ENCODE measurements at regions of chr12 and their contacts with region 1.

Region 1: GRCh38 chr12:111807232-111807631 is 34.8 kb upstream of the MAPKAPK5 start:
- DNase-seq: no peak
- ATAC-seq: no peak
- H3K4me3 Mint-ChIP-seq: no peak overlapping the region
- H3K27ac Mint-ChIP-seq: no peak overlapping the region
- H3K4me1 Mint-ChIP-seq: no peaks in the 10 kb centered on the region
- H3K27me3 Mint-ChIP-seq: no peaks in the 10 kb centered on the region
- CTCF ChIP-seq: no peak

Region 2: DNA sequence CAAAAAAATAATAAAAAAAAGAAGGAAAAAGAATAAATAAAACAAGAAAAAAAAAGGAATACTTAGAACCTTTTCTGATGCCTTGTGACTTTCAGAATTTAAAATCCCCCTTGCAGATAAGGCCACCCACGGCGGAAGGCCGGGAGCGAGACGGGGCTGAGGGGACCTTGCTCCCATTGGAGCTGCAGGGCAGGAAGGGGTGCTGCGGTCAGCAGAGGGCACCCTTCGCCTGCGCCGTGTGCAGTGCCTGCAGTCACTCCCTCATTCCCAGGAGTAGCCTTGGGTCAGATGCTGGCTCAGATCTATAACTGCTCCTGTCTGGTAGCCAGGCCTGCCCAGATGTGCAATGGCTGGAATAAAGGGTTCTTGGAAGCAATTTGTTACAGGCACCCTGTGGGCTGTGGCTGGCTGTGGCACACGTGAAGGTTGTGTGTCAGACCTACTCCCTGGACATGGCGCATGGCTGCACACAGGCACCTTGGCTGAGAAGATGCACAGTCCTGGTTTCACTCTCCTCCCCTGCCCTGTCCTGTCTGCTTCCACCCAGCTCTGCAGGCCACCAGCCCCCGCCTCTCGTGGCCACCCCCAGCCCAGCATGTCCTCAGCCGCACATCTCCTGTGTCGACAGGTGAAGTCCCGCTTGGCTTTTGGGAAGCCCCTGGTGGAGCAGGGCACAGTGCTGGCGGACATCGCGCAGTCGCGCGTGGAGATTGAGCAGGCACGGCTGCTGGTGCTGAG is 53.9 kb before region 1 on chr12:
- CTCF ChIA-PET with region 1: interaction called, 80 read pairs
- POLR2A ChIA-PET with region 1: no interaction called
- DNase-seq: peak; percentile 75
- ATAC-seq: peak; percentile 97
- H3K4me3 Mint-ChIP-seq: no peak overlapping the region
- H3K27ac Mint-ChIP-seq: no peak overlapping the region
- H3K4me1 Mint-ChIP-seq: peaks cover 12% of the 10 kb centered on the region
- H3K27me3 Mint-ChIP-seq: no peaks in the 10 kb centered on the region
- CTCF ChIP-seq: peak; percentile 62

Region 3: GRCh38 chr12:111841750-111842555 is 34.7 kb after region 1 on chr12 and contains the start of gene MAPKAPK5:
- CTCF ChIA-PET with region 1: no interaction called
- POLR2A ChIA-PET with region 1: no interaction called
- DNase-seq: peak; percentile 94
- ATAC-seq: peak; percentile 89
- H3K4me3 Mint-ChIP-seq: peak within 1 kb of the TSS; percentile 97
- H3K27ac Mint-ChIP-seq: peak within 1 kb of the TSS; percentile 98
- H3K4me1 Mint-ChIP-seq: peaks cover 21% of the 10 kb centered on the region
- H3K27me3 Mint-ChIP-seq: no peaks in the 10 kb centered on the region
- CTCF ChIP-seq: no peak
- total RNA-seq, gene MAPKAPK5: 71.1 to 81.8 TPM (median 71.2 TPM) in 3 replicates

Region 4: GRCh38 chr12:112087055-112087850 is 280.0 kb after region 1 on chr12:
- CTCF ChIA-PET with region 1: no interaction called
- POLR2A ChIA-PET with region 1: no interaction called
- DNase-seq: no peak
- ATAC-seq: peak; percentile 32; the same call in 1 of the 2 replicates
- H3K4me3 Mint-ChIP-seq: no peak overlapping the region
- H3K27ac Mint-ChIP-seq: peak overlapping the region; percentile 1; the same call in 1 of the 2 replicates
- H3K4me1 Mint-ChIP-seq: peaks cover 16% of the 10 kb centered on the region
- H3K27me3 Mint-ChIP-seq: no peaks in the 10 kb centered on the region
- CTCF ChIP-seq: no peak

Measured in WTC11 (cell line).